Ascending aorta (tissue), 2 donors: ENCODE measurements at regions of chr10 and their contacts with region 1.

Region 1: DNA sequence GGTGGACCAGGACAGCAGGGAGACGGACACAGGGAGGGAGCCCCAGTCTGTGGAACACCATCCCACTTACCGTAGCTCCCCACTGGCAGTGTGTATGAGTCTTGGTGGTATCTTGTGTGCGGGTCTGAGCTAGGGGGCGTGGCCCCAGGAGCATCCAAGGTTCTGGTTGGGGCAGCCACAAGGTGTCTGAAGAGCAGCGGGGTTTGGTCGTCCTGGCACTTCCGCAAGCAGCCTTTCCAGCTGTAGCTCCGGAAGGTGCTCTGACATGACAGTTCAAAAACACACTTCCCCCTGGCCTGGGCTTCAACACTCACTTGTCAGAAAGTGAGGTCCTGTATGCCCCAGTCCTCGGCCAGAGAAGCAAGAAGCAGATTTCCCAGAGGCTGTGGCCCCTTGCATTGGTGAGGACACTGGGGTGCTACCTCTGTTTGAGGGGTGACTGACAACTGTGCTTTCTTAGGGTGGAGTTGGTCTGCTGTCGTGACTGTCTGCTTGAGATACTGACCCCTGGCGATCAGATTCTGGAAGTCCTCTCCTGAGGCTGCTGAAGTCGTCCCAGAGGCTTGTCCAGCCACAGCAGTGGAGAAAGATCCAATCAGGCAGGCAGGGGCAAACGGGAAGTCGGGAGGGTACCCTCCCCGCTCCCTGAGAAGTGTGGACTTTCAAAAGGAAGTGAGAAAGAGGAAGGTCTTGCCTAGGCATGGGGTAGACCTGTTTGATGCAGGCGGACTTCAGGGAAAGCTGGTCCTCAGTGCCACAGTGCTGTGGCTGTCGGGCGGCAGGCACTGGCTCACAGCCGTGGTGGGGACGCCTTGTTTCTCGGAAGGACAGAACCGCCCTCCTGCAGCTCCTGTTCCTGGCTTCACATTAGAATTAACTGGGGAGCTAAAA is 51.4 kb upstream of the PFKFB3 start:
- DNase-seq: peak in 1 of 2 donors; percentile 84
- H3K4me3 ChIP-seq: peak overlapping the region in 1 of 2 donors; percentile 43
- H3K27ac ChIP-seq: peak overlapping the region; percentile 59 to 72
- H3K4me1 ChIP-seq: peaks cover 0 to 8% of the 10 kb centered on the region in 2 donors
- H3K27me3 ChIP-seq: no peaks in the 10 kb centered on the region
- CTCF ChIP-seq: peak; percentile 61 to 73 (median 70)

Region 2: DNA sequence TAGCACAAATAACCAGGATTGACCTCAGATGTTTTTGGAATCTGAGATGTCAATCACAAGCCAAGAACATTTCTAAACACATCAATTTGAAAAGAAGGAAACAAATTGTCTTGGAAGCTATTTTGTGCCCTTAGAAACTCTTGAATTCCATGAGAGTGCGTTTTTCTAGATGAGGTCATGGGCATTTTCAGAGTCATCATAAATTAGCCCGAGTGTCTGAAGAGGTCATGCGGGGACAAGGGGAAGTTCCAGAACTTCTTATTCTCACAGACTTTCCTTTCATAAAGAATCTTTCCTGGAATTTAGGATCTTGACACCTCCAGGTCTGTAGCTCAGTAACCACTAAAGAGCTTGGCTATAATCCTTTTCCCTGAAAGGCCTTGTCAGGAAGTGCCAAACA is 117.4 kb before region 1 on chr10:
- intact Hi-C with region 1: no loop called
- DNase-seq: peak in 1 of 2 donors; percentile 24
- H3K4me3 ChIP-seq: no peak overlapping the region
- H3K27ac ChIP-seq: no peak overlapping the region
- H3K4me1 ChIP-seq: no peaks in the 10 kb centered on the region
- H3K27me3 ChIP-seq: no peaks in the 10 kb centered on the region
- CTCF ChIP-seq: no peak

Region 3: GRCh38 chr10:6108603-6109443 is 42.5 kb before region 1 on chr10:
- intact Hi-C with region 1: loop called (anchors 2 kb)
- DNase-seq: no peak
- H3K4me3 ChIP-seq: no peak overlapping the region
- H3K27ac ChIP-seq: no peak overlapping the region
- H3K4me1 ChIP-seq: peaks cover 0 to 2% of the 10 kb centered on the region in 2 donors
- H3K27me3 ChIP-seq: no peaks in the 10 kb centered on the region
- CTCF ChIP-seq: peak; percentile 69 to 84 (median 82)

Region 4: GRCh38 chr10:6394084-6394483 is 242.8 kb after region 1 on chr10:
- intact Hi-C with region 1: no loop called
- DNase-seq: no peak
- H3K4me3 ChIP-seq: no peak overlapping the region
- H3K27ac ChIP-seq: no peak overlapping the region
- H3K4me1 ChIP-seq: peaks cover 0 to 2% of the 10 kb centered on the region in 2 donors
- H3K27me3 ChIP-seq: no peaks in the 10 kb centered on the region
- CTCF ChIP-seq: no peak